ENCODE measurements at regions of chr12 and their contacts with region 1.

Region 1: GRCh38 chr12:6607751-6608591 is 792 bp upstream of the CHD4 start:
- DNase-seq: peak; percentile 25
- ATAC-seq: no peak
- H3K4me3 ChIP-seq: no peak overlapping the region
- H3K27ac ChIP-seq: peak overlapping the region; percentile 44
- H3K4me1 ChIP-seq: peaks cover 23% of the 10 kb centered on the region
- H3K27me3 ChIP-seq: no peaks in the 10 kb centered on the region
- CTCF ChIP-seq: no peak
- POLR2A ChIP-seq: no peak
- RAD21 ChIP-seq: no peak

Region 2: DNA sequence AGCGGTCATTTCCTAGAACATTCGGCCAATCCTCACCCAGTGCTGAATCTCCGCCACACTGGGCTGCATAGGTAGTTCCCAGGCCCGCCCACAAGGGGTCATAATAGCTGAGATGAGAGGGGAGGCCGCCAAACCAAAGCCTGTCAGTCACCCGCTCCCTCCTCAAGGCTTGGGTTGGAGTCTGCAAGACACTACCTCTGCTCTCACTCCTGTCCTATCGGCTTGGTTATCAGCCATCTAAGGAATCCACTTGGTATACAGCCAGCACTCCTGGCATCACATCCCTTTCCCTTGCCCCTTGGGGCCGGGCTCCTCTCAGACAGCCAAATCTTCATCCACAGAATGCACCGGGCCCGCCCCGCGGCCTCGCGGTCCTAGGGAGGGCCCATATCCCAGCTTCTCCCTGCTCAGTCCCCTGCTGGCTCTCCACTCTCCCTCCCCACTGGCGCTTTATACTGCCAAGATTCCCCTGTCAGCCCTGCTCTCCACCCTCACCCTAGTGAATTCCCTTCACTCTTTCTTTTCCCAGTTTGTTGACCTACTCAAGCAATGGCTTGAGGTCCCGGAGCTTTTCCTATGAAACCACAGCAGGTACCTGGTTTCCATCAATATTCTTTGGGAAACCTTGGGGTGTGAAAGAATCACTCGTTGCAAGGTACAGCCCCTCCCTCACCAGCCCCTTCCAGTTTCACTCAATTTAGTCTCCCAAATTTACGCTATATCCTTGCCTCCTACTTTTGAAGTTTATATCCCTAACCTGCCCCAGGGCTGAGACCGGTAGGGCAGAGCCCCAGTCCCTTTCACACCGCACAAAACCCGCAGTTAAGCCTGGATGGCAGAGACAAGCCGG is 53.6 kb before region 1 on chr12:
- CTCF ChIA-PET with region 1: no interaction called
- POLR2A ChIA-PET with region 1: interaction called, 3 read pairs
- dilution Hi-C with region 1: no loop called
- in situ Hi-C with region 1: no loop called
- intact Hi-C with region 1: loop called (anchors 5 kb)
- DNase-seq: peak; percentile 72
- ATAC-seq: peak; percentile 40
- H3K4me3 ChIP-seq: peak overlapping the region; percentile 82
- H3K27ac ChIP-seq: peak overlapping the region; percentile 46
- H3K4me1 ChIP-seq: peaks cover 40% of the 10 kb centered on the region
- H3K27me3 ChIP-seq: no peaks in the 10 kb centered on the region
- CTCF ChIP-seq: peak; percentile 60
- POLR2A ChIP-seq: no peak
- RAD21 ChIP-seq: peak; percentile 43

Region 3: GRCh38 chr12:6582196-6582595 is 25.8 kb before region 1 on chr12:
- CTCF ChIA-PET with region 1: interaction called, 4 read pairs
- POLR2A ChIA-PET with region 1: interaction called, 27 read pairs
- dilution Hi-C with region 1: no loop called
- in situ Hi-C with region 1: no loop called
- intact Hi-C with region 1: no loop called
- DNase-seq: no peak
- ATAC-seq: no peak
- H3K4me3 ChIP-seq: no peak overlapping the region
- H3K27ac ChIP-seq: no peak overlapping the region
- H3K4me1 ChIP-seq: no peaks in the 10 kb centered on the region
- H3K27me3 ChIP-seq: no peaks in the 10 kb centered on the region
- CTCF ChIP-seq: no peak; the same call in 1 of the 2 replicates
- POLR2A ChIP-seq: no peak
- RAD21 ChIP-seq: no peak

Region 4: GRCh38 chr12:6592087-6592486 is 15.9 kb before region 1 on chr12:
- CTCF ChIA-PET with region 1: no interaction called
- POLR2A ChIA-PET with region 1: interaction called, 11 read pairs
- dilution Hi-C with region 1: no loop called
- in situ Hi-C with region 1: no loop called
- intact Hi-C with region 1: no loop called
- DNase-seq: no peak
- ATAC-seq: no peak
- H3K4me3 ChIP-seq: no peak overlapping the region
- H3K27ac ChIP-seq: no peak overlapping the region
- H3K4me1 ChIP-seq: no peaks in the 10 kb centered on the region
- H3K27me3 ChIP-seq: no peaks in the 10 kb centered on the region
- CTCF ChIP-seq: no peak
- POLR2A ChIP-seq: no peak
- RAD21 ChIP-seq: no peak